GM12878 (cell line): ENCODE measurements at regions of chr13 and their contacts with region 1.

Region 1: DNA sequence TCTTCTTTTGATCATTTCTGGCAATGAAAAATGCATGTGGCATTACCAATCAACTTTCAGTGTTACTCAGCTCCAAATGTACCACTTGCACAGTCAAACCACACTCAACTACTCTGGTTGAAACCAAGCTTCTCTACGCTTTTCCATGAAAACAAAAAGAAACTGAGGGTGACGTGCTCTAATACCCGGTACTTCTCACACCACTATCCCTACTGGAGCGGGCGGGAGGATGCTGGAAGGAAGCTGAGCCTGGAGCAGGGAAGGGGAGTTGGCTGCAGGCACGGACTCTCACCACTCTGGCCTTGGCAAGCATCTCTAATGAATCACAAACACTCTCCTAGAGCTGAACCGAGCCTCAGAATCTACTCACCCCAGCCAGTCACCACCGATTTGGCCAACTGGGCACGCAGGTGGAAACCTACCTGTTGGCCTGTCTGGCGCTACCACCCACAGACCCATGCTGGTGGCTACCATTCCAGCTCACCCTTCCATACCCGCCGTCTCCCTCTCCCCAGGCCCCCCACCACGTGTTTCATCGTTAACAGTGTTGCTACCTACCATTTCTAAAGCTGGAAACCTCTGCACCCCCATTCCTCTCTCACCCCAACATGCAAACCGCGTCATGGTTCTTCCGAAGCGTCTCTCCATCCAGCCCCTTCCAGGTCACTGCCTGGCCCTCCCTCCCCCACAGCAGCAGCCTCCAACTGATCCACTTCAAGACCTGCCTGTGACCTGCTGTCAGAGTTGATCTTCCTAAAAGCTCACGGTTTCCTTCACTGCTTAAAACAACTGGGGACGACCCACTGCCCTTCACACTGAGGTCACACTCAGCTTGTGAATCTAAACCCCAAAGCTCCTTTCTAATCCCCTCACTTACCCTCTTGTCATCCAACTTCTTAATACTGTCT is 48.0 kb downstream of the STK24 start:
- DNase-seq: no peak
- ATAC-seq: peak; percentile 23
- H3K4me3 ChIP-seq: no peak overlapping the region
- H3K27ac ChIP-seq: peak overlapping the region; percentile 16; the same call in 1 of the 2 replicates
- H3K4me1 ChIP-seq: peaks cover 56% of the 10 kb centered on the region
- H3K27me3 ChIP-seq: no peaks in the 10 kb centered on the region
- CTCF ChIP-seq: no peak
- EP300 ChIP-seq: no peak
- POLR2A ChIP-seq: no peak
- RAD21 ChIP-seq: no peak

Region 2: GRCh38 chr13:98333486-98333885 is 195.4 kb before region 1 on chr13:
- CTCF ChIA-PET with region 1: no interaction called
- POLR2A ChIA-PET with region 1: no interaction called
- RAD21 ChIA-PET with region 1: no interaction called
- SMC1A ChIA-PET with region 1: no interaction called
- in situ Hi-C with region 1: no loop called
- intact Hi-C with region 1: no loop called
- DNase-seq: no peak
- ATAC-seq: no peak
- H3K4me3 ChIP-seq: no peak overlapping the region
- H3K27ac ChIP-seq: no peak overlapping the region
- H3K4me1 ChIP-seq: no peaks in the 10 kb centered on the region
- H3K27me3 ChIP-seq: no peaks in the 10 kb centered on the region
- CTCF ChIP-seq: no peak
- EP300 ChIP-seq: no peak
- POLR2A ChIP-seq: no peak
- RAD21 ChIP-seq: no peak

Region 3: GRCh38 chr13:98517576-98518310 is 11.2 kb before region 1 on chr13:
- CTCF ChIA-PET with region 1: interaction called, 4 read pairs
- POLR2A ChIA-PET with region 1: interaction called, 4 read pairs
- RAD21 ChIA-PET with region 1: interaction called, 5 read pairs
- SMC1A ChIA-PET with region 1: interaction called, 22 read pairs
- in situ Hi-C with region 1: no loop called
- intact Hi-C with region 1: no loop called
- DNase-seq: peak; percentile 66
- ATAC-seq: peak; percentile 64
- H3K4me3 ChIP-seq: no peak overlapping the region; the same call in 1 of the 2 replicates
- H3K27ac ChIP-seq: peak overlapping the region; percentile 71
- H3K4me1 ChIP-seq: peaks cover 64% of the 10 kb centered on the region
- H3K27me3 ChIP-seq: no peaks in the 10 kb centered on the region
- CTCF ChIP-seq: no peak
- EP300 ChIP-seq: peak in 1 of 2 experiments; percentile 64; a peak in 1 of 4 replicates
- POLR2A ChIP-seq: no peak
- RAD21 ChIP-seq: no peak

Region 4: GRCh38 chr13:98542568-98543377 is 13.9 kb after region 1 on chr13:
- CTCF ChIA-PET with region 1: interaction called, 7 read pairs
- POLR2A ChIA-PET with region 1: interaction called, 11 read pairs
- RAD21 ChIA-PET with region 1: interaction called, 4 read pairs
- SMC1A ChIA-PET with region 1: interaction called, 14 read pairs
- in situ Hi-C with region 1: no loop called
- intact Hi-C with region 1: no loop called
- DNase-seq: no peak
- ATAC-seq: peak; percentile 58
- H3K4me3 ChIP-seq: peak overlapping the region; percentile 63
- H3K27ac ChIP-seq: peak overlapping the region; percentile 82
- H3K4me1 ChIP-seq: peaks cover 59% of the 10 kb centered on the region
- H3K27me3 ChIP-seq: no peaks in the 10 kb centered on the region
- CTCF ChIP-seq: no peak
- EP300 ChIP-seq: no peak
- POLR2A ChIP-seq: no peak
- RAD21 ChIP-seq: no peak